Common myeloid progenitor, CD34-positive (primary cell): ENCODE measurements at regions of chr9 and their contacts with region 1.

Region 1: DNA sequence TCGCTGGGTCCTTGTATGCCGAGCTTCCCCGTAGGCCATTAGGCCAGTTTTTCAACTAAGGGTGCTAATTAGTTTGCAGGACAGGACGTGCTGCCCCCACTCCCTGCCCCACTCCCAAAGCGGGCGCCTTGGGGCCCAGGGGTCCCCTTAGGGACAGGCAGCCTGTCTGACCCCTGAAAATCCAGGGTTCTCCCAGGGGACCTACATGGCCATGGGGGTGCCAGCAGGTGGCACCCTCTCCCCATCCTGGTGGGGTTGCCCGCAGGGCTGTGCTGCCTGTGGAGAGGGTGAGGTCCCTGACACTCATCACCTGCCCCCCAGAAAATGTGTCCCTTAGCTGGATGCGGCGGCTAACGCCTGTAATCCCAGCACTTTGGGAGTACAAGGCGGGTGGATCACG is 8.5 kb upstream of the CCDC187 start:
- DNase-seq: peak; percentile 71 to 84 (median 77)
- H3K4me3 ChIP-seq: no peak overlapping the region
- H3K27ac ChIP-seq: no peak overlapping the region
- H3K4me1 ChIP-seq: peaks cover 5 to 52% (median 31%) of the 10 kb centered on the region in 4 experiments
- H3K27me3 ChIP-seq: no peaks in the 10 kb centered on the region

Region 2: DNA sequence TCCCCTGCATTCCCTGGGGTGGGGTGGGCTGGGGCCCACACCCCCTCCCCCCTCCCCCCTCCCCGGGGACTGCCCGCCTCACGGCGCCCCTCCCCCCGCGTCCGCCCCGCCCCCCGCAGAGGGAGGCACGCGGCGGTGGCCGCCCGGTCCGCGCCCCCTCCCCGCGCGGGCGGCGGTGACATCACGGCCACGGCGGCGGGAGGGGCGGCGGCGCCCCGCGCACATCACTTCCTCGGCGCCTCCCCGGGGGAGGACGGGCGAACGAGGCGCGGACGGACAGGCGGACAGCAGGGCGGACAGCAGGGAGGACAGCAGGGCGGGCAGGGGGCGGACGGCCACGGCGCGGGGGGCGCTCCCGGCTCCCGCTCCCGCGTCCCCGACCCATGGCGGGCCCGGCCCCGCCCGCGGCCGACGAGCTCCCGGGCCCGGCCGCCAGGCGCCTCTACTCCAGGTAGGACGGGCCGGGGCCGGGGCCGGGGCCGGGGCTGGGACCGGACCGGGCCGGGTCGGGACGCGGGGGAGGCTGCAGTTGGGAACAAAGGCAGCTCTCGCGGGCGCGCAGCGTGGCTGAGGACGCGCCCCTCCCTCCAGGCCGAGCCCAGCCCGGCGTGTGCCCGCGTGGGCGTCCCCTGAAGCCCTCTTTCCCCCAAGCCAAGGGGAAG is 15.0 kb after region 1 on chr9 and contains the start of gene GPSM1:
- CTCF ChIA-PET with region 1: interaction called, 101 read pairs
- POLR2A ChIA-PET with region 1: interaction called, 3 read pairs
- DNase-seq: peak in 2 of 3 donors; percentile 62 to 65
- H3K4me3 ChIP-seq: peak within 1 kb of the TSS; percentile 36 to 88 (median 76)
- H3K27ac ChIP-seq: peak within 1 kb of the TSS; percentile 75 to 85
- H3K4me1 ChIP-seq: peaks cover 0 to 76% (median 61%) of the 10 kb centered on the region in 4 experiments
- H3K27me3 ChIP-seq: no peaks in the 10 kb centered on the region

Region 3: GRCh38 chr9:136345281-136346156 is 33.1 kb after region 1 on chr9:
- CTCF ChIA-PET with region 1: interaction called, 12 read pairs
- POLR2A ChIA-PET with region 1: interaction called, 4 read pairs
- DNase-seq: no peak
- H3K4me3 ChIP-seq: no peak overlapping the region
- H3K27ac ChIP-seq: no peak overlapping the region
- H3K4me1 ChIP-seq: peaks cover 0 to 12% (median 8%) of the 10 kb centered on the region in 4 experiments
- H3K27me3 ChIP-seq: no peaks in the 10 kb centered on the region

Region 4: DNA sequence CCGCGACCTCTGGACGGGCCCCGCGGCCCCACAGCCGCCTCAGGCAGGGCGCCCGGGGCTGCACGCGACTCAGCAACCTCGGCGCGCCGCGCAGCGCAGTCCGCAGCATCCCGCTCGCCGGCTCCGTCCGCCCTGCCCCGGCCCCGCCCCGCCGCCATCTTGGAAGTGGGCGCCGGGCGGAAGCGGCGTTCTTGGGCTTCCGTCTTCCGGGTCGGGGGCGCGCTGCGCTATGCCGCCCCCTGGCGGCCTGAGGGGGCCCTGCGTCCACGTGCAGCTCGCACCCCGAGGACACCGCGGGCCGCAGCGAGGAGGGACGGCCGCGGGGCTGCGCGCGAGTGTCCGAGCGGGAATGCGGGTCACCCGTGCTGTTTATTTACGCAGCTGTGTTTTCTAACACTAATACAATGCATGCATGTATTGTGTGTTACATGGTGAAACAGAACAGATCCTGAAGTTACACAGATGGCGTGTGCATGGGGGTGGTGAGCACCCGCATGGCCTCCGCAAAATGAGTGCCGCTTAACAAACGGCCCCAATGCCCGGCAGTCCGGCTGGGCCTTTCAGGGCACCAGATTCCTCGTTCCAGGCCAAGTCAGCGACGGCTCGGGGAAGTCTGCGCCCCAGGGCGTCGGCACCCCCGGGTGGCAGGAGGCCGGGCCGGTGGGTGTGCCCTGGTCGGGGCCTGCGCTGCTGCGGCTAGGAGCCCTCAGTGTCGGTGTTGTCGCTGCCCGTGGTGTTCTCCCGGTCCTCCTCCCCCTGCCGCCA is 51.4 kb after region 1 on chr9 and contains the start of gene DNLZ:
- CTCF ChIA-PET with region 1: interaction called, 38 read pairs
- POLR2A ChIA-PET with region 1: interaction called, 8 read pairs
- DNase-seq: peak; percentile 84 to 92 (median 88)
- H3K4me3 ChIP-seq: peak within 1 kb of the TSS; percentile 63 to 89 (median 80)
- H3K27ac ChIP-seq: peak within 1 kb of the TSS in 1 of 2 experiments; percentile 43
- H3K4me1 ChIP-seq: peaks cover 0 to 28% (median 19%) of the 10 kb centered on the region in 4 experiments
- H3K27me3 ChIP-seq: peaks cover 0 to 3% (median 0%) of the 10 kb centered on the region in 5 experiments

Region 5: DNA sequence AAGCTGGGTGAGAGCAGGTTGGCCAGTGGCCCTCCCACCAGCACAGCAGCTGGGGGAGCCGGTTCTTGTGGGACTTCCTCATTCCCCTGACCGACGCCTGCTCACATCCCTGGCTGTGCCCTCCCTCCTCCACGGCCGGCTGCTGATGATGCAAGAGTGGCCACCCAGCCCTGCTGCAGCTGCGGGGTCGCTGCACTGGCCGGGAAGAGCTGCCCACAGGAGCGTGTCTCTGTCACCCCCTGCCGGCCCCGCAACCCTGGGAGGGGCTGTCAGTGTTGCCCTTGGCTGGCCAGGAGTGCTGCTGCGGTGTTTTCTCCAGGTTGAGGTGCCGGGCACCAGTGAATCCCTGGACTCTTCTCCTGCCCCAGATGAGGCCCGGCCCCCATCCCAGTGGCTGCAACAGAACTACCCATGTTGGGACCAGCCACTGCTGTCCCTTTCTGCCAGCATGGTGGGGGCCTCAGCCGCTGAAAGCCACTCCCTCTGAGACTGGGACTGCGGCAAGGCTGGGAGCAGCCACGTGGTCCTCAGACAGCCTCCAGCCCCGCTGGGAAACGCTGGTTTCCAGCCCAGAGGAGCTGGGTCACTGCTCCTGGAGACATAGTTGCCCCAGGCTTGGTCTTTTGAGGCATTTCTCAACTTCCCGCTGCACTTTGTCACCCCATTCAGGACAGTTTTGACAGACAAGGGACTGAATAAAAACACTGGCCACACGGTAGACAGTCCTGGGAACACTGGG is 60.3 kb after region 1 on chr9:
- CTCF ChIA-PET with region 1: interaction called, 26 read pairs
- POLR2A ChIA-PET with region 1: no interaction called
- DNase-seq: peak; percentile 22 to 75 (median 71)
- H3K4me3 ChIP-seq: peak overlapping the region; percentile 9 to 79 (median 71)
- H3K27ac ChIP-seq: peak overlapping the region in 1 of 2 experiments; percentile 54
- H3K4me1 ChIP-seq: peaks cover 2 to 32% (median 29%) of the 10 kb centered on the region in 4 experiments
- H3K27me3 ChIP-seq: no peaks in the 10 kb centered on the region